Gastrocnemius medialis (tissue), 4 donors: ENCODE measurements at regions of chr2 and their contacts with region 1.

Region 1: GRCh38 chr2:61065715-61066709 is at the start of gene SANBR:
- DNase-seq: peak; percentile 77 to 87
- ATAC-seq: peak; percentile 93 to 94
- H3K4me3 ChIP-seq: peak within 1 kb of the TSS; percentile 66 to 94 (median 78)
- H3K27ac ChIP-seq: peak within 1 kb of the TSS; percentile 69 to 89 (median 85)
- H3K4me1 ChIP-seq: peaks cover 5 to 16% of the 10 kb centered on the region in 2 donors
- H3K27me3 ChIP-seq: no peaks in the 10 kb centered on the region
- CTCF ChIP-seq: peak in 2 of 5 experiments; percentile 8 to 37
- POLR2A ChIP-seq: peak; percentile 71 to 80
- total RNA-seq, gene SANBR: 1.5 to 6.5 (median 2.1) TPM

Region 2: DNA sequence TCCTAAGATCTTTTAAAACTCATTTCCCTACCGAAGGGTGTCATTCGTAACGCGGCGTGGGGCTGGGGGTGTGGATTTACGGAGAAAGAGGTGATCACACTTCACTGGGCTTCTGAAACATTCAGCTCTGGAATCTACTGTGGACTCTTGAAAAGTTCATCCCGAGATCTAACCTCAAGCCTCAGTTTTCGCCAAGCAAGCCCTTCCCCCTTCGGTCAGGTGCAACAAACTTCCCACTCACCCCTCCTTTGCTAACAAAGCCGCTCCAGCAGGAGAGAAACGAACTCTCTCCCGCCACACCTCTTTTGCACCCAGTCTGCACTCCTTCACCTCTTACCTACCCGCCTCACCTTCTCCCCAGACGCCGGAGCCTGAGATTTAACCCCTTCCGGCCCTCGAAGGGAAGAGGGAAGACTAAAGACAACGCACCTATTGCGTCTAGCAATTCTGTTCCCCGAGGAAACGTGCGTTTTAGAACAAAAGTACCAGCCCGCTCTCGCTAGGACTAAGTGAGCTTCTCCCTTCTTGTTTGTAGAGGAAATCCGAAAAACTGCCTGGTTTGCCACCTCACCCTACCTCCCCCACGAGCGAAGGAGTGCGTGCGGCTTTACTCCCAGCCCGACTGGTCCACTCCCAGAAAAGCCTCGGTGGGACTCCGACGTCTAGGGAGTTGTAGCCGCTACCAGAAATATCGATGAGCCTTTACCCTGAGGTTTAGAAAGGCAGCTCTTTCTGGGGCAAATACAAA is 49.0 kb before region 1 on chr2:
- in situ Hi-C with region 1: no loop called
- intact Hi-C with region 1: loop called (anchors 1 kb)
- DNase-seq: peak; percentile 70
- ATAC-seq: peak; percentile 90 to 93
- H3K4me3 ChIP-seq: peak overlapping the region; percentile 85 to 94 (median 90)
- H3K27ac ChIP-seq: peak overlapping the region; percentile 94 to 96 (median 95)
- H3K4me1 ChIP-seq: peaks cover 35 to 38% of the 10 kb centered on the region in 2 donors
- H3K27me3 ChIP-seq: no peaks in the 10 kb centered on the region
- CTCF ChIP-seq: no peak
- POLR2A ChIP-seq: peak in 1 of 2 donors; percentile 82